ENCODE measurements at regions of chr17 and their contacts with region 1.

Region 1: DNA sequence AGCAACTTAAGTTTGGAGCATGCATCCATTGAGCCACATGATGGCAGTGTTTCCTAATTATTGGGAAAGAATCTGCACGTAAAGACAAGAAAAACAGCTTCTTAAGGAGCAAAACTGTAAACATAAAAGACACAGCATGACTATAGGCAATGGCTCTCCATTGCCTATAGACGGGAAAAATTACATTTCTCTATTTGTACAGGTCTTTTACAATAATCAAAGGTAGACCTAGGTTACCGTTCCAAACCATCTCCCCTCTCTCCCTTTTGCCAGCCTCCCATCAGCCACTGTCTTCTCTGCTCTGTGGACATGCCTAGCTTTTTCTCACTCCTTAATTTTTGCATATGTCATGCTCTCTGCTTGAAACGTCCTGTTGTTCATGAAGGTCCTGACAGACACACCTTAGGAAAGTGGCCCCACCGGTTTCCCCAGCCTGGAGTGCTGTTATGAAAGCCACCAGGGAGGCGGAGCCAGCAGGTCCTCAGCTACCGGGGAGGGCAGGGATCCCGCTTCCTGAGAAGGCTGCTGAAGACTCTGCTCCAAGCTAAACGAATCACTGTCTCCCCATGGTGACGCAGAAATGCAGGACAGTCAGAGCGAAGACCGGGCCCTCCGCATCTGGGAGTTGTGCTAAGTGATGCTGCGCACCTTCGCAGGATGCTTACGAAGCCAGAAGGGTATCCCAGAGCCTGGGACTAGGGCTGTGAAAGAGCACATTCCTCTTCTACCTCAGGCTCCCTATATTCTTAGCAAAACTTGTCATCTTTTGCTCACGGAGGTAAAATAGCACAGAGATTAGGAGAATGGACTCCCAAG is 2.2 kb upstream of the SLC16A11 start:
- DNase-seq: peak; percentile 53
- H3K4me3 ChIP-seq: peak overlapping the region in 1 of 2 experiments; percentile 14; a peak in 1 of 4 replicates
- H3K27ac ChIP-seq: no peak overlapping the region
- H3K4me1 ChIP-seq: peaks cover 0 to 22% of the 10 kb centered on the region in 2 experiments; a peak in 1 of 4 replicates
- H3K27me3 ChIP-seq: peaks cover 31% of the 10 kb centered on the region; the same call in 1 of the 2 replicates
- CTCF ChIP-seq: peak; percentile 92
- EP300 ChIP-seq: no peak
- RAD21 ChIP-seq: peak; percentile 91

Region 2: GRCh38 chr17:6853764-6854442 is 192.2 kb before region 1 on chr17:
- CTCF ChIA-PET with region 1: no interaction called
- POLR2A ChIA-PET with region 1: no interaction called
- DNase-seq: no peak
- H3K4me3 ChIP-seq: no peak overlapping the region
- H3K27ac ChIP-seq: no peak overlapping the region
- H3K4me1 ChIP-seq: no peaks in the 10 kb centered on the region
- H3K27me3 ChIP-seq: peaks cover 45% of the 10 kb centered on the region; the same call in 1 of the 2 replicates
- CTCF ChIP-seq: peak; percentile 45
- EP300 ChIP-seq: no peak
- RAD21 ChIP-seq: no peak

Region 3: GRCh38 chr17:6903326-6903900 is 142.7 kb before region 1 on chr17:
- CTCF ChIA-PET with region 1: no interaction called
- POLR2A ChIA-PET with region 1: no interaction called
- DNase-seq: no peak
- H3K4me3 ChIP-seq: no peak overlapping the region
- H3K27ac ChIP-seq: no peak overlapping the region
- H3K4me1 ChIP-seq: no peaks in the 10 kb centered on the region
- H3K27me3 ChIP-seq: no peaks in the 10 kb centered on the region
- CTCF ChIP-seq: no peak
- EP300 ChIP-seq: no peak
- RAD21 ChIP-seq: no peak

Region 4: DNA sequence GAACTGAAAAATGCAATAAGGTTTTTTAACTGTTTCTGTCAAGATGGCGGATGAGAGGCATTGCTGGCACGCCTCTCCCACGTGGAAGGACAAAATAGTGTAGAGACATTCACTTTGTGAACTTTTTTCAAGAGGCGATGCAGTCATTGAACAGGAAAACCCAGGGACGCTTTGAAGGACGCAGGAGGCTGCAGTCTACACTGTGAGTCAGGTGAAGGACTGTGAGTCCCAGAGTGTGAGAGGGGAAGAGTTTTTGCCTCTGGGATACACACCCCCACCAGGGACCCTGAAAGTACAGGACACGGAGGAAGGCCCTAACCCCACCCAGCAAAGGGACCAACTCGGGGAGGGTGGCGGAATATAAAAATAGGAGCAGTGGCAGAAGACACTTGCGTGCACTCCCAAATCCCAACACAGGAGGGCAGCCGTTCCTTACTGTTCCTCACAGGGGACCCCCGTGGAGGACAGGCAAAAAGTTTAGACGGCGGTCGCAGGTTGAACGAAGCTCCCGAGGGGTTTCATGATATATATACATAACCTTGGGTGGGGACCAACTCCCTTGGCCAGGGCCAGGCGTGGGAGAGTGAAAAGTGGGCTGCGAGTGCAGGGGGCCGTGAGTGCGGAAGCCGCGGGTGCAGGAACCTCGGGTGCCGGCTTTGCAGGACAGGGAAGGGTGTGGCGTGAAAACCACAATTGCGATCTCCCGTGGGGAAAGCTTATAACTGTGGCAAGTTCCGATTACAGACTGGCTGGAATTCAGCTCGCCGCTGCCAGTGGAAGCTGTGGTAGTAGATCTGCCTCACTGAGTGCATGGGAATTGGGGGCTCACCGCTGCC is 132.3 kb before region 1 on chr17:
- CTCF ChIA-PET with region 1: interaction called, 12 read pairs
- POLR2A ChIA-PET with region 1: no interaction called
- DNase-seq: peak; percentile 77
- H3K4me3 ChIP-seq: peak overlapping the region; percentile 43 to 60
- H3K27ac ChIP-seq: no peak overlapping the region
- H3K4me1 ChIP-seq: peaks cover 0 to 5% of the 10 kb centered on the region in 2 experiments; a peak in 1 of 4 replicates
- H3K27me3 ChIP-seq: no peaks in the 10 kb centered on the region
- CTCF ChIP-seq: peak; percentile 90
- EP300 ChIP-seq: no peak
- RAD21 ChIP-seq: peak; percentile 91

Region 5: DNA sequence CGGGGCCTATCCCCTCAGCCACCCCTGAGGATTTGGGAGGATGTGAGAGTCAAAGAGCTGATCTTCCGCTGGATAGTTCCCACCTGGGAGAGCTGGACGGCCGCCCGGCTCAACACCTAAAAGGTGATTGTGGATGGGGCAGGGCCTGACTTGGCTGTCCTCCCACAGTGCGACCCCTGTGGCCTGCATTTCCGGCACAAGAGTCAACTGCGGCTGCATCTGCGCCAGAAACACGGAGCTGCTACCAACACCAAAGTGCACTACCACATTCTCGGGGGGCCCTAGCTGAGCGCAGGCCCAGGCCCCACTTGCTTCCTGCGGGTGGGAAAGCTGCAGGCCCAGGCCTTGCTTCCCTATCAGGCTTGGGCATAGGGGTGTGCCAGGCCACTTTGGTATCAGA is 18.8 kb before region 1 on chr17:
- CTCF ChIA-PET with region 1: interaction called, 31 read pairs
- POLR2A ChIA-PET with region 1: no interaction called
- DNase-seq: no peak
- H3K4me3 ChIP-seq: no peak overlapping the region
- H3K27ac ChIP-seq: no peak overlapping the region
- H3K4me1 ChIP-seq: peaks cover 0 to 9% of the 10 kb centered on the region in 2 experiments; a peak in 1 of 4 replicates
- H3K27me3 ChIP-seq: no peaks in the 10 kb centered on the region
- CTCF ChIP-seq: no peak
- EP300 ChIP-seq: no peak
- RAD21 ChIP-seq: no peak

Region 6: GRCh38 chr17:7060165-7060891 is 14.2 kb after region 1 on chr17:
- CTCF ChIA-PET with region 1: interaction called, 37 read pairs
- POLR2A ChIA-PET with region 1: no interaction called
- DNase-seq: no peak
- H3K4me3 ChIP-seq: no peak overlapping the region
- H3K27ac ChIP-seq: no peak overlapping the region
- H3K4me1 ChIP-seq: peaks cover 0 to 9% of the 10 kb centered on the region in 2 experiments; a peak in 1 of 4 replicates
- H3K27me3 ChIP-seq: peaks cover 58% of the 10 kb centered on the region
- CTCF ChIP-seq: no peak
- EP300 ChIP-seq: no peak
- RAD21 ChIP-seq: no peak

Region 7: GRCh38 chr17:7122381-7122780 is 76.3 kb after region 1 on chr17:
- CTCF ChIA-PET with region 1: interaction called, 24 read pairs
- POLR2A ChIA-PET with region 1: no interaction called
- DNase-seq: no peak
- H3K4me3 ChIP-seq: no peak overlapping the region
- H3K27ac ChIP-seq: no peak overlapping the region
- H3K4me1 ChIP-seq: no peaks in the 10 kb centered on the region
- H3K27me3 ChIP-seq: peaks cover 76% of the 10 kb centered on the region
- CTCF ChIP-seq: no peak
- EP300 ChIP-seq: no peak
- RAD21 ChIP-seq: no peak

Region 8: DNA sequence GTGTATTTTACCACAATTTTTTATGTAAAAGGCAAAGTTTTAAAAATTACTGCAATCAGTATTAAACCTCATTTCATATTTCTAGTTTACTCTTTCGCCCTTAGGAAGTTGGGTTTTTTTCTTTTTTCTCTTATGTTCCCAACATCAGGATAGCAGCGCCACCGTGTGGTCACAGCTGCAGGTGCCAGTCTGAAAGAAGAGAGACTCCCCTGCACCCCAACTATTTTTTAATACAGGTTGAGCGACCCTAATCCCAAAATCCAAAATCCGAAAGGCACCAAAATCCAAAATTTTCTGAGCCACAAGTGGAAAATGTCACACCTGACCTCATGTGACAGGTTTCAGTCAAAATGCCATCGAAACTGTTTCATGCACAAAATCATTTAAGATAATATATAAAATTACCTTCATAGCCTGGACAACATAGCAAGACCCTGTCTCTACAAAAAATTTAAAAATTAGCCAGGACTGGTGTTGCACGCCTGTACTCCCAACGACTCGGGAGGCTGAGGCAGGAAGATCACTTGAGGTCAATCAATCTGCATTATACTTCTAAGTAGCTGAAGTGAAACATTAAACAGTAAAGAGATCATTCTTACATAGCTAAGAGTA is 90.3 kb after region 1 on chr17:
- CTCF ChIA-PET with region 1: interaction called, 502 read pairs
- POLR2A ChIA-PET with region 1: interaction called, 3 read pairs
- DNase-seq: peak; percentile 70
- H3K4me3 ChIP-seq: peak overlapping the region in 1 of 2 experiments; percentile 36; a peak in 1 of 4 replicates
- H3K27ac ChIP-seq: no peak overlapping the region
- H3K4me1 ChIP-seq: no peaks in the 10 kb centered on the region
- H3K27me3 ChIP-seq: peaks cover 88% of the 10 kb centered on the region
- CTCF ChIP-seq: peak; percentile 99
- EP300 ChIP-seq: no peak
- RAD21 ChIP-seq: peak; percentile 86

Region 9: DNA sequence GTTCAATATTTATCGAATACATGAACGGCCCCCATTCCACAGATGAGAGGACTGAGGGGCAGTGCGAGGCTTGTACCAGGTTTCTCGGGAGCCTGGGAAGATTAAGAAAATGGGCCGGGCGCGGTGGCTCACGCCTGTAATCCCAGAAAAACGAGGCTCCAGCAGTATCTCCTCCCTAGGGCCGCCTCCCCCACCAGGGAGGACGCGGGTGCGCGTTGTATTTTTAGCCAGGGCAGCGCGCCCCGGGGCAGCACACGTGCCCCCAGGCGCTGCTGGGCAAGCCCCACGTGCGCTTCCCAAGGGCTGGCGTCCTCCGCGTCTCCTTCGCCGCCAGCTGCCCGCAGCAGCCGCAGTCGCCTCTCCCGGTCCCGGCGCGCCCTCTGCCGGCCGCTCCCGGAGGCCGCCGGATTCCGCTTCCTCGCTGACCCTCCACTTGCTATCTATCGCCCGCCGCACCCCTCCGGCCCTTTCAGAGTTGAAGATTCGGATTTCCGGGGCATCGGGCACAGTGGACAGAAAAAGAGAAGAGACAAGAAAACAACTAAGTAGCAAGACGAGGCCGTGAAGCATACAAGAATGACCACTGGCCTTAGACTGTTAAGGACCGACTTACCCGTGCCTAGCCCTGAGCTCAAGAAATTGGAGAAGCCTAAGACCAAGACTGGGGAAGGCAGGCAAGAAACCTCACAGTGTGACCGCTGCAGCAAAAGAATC is 250.2 kb after region 1 on chr17:
- CTCF ChIA-PET with region 1: interaction called, 41 read pairs
- POLR2A ChIA-PET with region 1: no interaction called
- DNase-seq: peak; percentile 92
- H3K4me3 ChIP-seq: peak overlapping the region in 1 of 2 experiments; percentile 37; a peak in 1 of 4 replicates
- H3K27ac ChIP-seq: no peak overlapping the region
- H3K4me1 ChIP-seq: peaks cover 3 to 8% of the 10 kb centered on the region in 2 experiments; a peak in 1 of 4 replicates
- H3K27me3 ChIP-seq: peaks cover 24% of the 10 kb centered on the region; the same call in 1 of the 2 replicates
- CTCF ChIP-seq: peak; percentile 88
- EP300 ChIP-seq: no peak
- RAD21 ChIP-seq: peak; percentile 92